B cell (primary cell): ENCODE measurements at regions of chr6 and their contacts with region 1.

Region 1: GRCh38 chr6:797479-798077 is 104.6 kb upstream of the EXOC2 start:
- DNase-seq: peak; percentile 65
- ATAC-seq: no peak
- H3K4me3 ChIP-seq: no peak overlapping the region
- H3K4me3 Mint-ChIP-seq: no peak overlapping the region
- H3K27ac ChIP-seq: no peak overlapping the region
- H3K27ac Mint-ChIP-seq: no peak overlapping the region
- H3K4me1 ChIP-seq: peaks cover 7 to 19% of the 10 kb centered on the region in 2 donors
- H3K4me1 Mint-ChIP-seq: peaks cover 14% of the 10 kb centered on the region
- H3K27me3 ChIP-seq: peaks cover 0 to 5% (median 4%) of the 10 kb centered on the region in 4 experiments
- H3K27me3 Mint-ChIP-seq: peaks cover 37% of the 10 kb centered on the region
- CTCF ChIP-seq: peak; percentile 84

Region 2: GRCh38 chr6:1039191-1039590 is 241.6 kb after region 1 on chr6:
- CTCF ChIA-PET with region 1: no interaction called
- POLR2A ChIA-PET with region 1: no interaction called
- intact Hi-C with region 1: no loop called
- DNase-seq: no peak
- ATAC-seq: no peak
- H3K4me3 ChIP-seq: no peak overlapping the region
- H3K4me3 Mint-ChIP-seq: no peak overlapping the region
- H3K27ac ChIP-seq: no peak overlapping the region
- H3K27ac Mint-ChIP-seq: no peak overlapping the region
- H3K4me1 ChIP-seq: no peaks in the 10 kb centered on the region
- H3K4me1 Mint-ChIP-seq: no peaks in the 10 kb centered on the region
- H3K27me3 ChIP-seq: no peaks in the 10 kb centered on the region
- H3K27me3 Mint-ChIP-seq: peaks cover 18% of the 10 kb centered on the region
- CTCF ChIP-seq: no peak

Region 3: DNA sequence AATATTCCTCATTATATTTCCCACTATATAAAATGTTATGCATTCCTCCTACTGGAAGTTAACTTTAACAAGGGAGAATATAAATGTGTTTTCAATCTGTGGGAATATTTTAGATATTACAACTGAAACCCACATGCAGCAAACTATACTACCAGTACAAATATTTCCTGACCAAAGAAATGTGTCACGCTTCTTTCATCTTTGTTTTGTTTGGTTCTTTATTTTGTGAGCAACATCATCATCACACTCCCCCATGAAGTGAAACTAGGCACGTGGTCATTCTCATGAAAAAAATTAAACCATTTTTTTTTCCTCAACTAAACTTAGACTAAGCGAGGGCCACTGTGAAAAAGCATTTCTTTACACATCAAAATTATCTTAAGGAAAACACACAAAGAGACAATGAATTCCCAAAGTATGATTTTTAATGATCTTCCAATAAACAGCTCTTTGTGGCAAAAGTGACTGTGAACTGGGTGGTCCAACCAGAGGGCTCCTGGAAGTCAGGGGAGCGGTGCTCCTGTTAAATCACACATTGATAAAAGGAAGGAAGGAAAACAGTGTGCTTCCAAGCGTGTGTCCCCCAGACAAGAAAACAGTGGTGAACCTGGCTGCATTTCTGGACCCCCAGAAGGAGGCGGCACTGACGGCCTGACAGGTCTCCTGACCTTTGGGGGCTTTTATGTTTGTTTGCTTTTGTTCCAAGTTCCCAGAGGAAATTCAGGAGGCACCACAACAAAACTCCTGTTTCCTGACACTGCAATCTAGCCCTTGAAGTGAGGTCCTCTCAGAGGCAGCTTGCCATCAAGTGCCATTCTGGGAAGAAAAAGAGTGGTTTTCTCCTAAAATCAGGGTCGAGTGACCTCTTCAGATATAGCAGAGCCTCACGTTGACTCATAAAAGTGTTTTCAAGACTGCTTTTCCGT is 347.5 kb after region 1 on chr6:
- CTCF ChIA-PET with region 1: no interaction called
- POLR2A ChIA-PET with region 1: no interaction called
- intact Hi-C with region 1: no loop called
- DNase-seq: no peak
- ATAC-seq: no peak
- H3K4me3 ChIP-seq: no peak overlapping the region
- H3K4me3 Mint-ChIP-seq: no peak overlapping the region
- H3K27ac ChIP-seq: no peak overlapping the region
- H3K27ac Mint-ChIP-seq: no peak overlapping the region
- H3K4me1 ChIP-seq: no peaks in the 10 kb centered on the region
- H3K4me1 Mint-ChIP-seq: no peaks in the 10 kb centered on the region
- H3K27me3 ChIP-seq: no peaks in the 10 kb centered on the region
- H3K27me3 Mint-ChIP-seq: peaks cover 13% of the 10 kb centered on the region
- CTCF ChIP-seq: no peak

Region 4: GRCh38 chr6:1396952-1397868 is 599.6 kb after region 1 on chr6:
- CTCF ChIA-PET with region 1: interaction called, 47 read pairs
- POLR2A ChIA-PET with region 1: no interaction called
- intact Hi-C with region 1: loop called (anchors 1 kb)
- DNase-seq: peak; percentile 80
- ATAC-seq: peak; percentile 43
- H3K4me3 ChIP-seq: no peak overlapping the region
- H3K4me3 Mint-ChIP-seq: no peak overlapping the region
- H3K27ac ChIP-seq: no peak overlapping the region
- H3K27ac Mint-ChIP-seq: no peak overlapping the region
- H3K4me1 ChIP-seq: peaks cover 17 to 19% of the 10 kb centered on the region in 2 donors
- H3K4me1 Mint-ChIP-seq: peaks cover 9% of the 10 kb centered on the region
- H3K27me3 ChIP-seq: peaks cover 0 to 65% (median 40%) of the 10 kb centered on the region in 4 experiments
- H3K27me3 Mint-ChIP-seq: peaks cover 57% of the 10 kb centered on the region
- CTCF ChIP-seq: peak; percentile 99